CD8-positive, alpha-beta T cell (primary cell): ENCODE measurements at regions of chr9 and their contacts with region 1.

Region 1: DNA sequence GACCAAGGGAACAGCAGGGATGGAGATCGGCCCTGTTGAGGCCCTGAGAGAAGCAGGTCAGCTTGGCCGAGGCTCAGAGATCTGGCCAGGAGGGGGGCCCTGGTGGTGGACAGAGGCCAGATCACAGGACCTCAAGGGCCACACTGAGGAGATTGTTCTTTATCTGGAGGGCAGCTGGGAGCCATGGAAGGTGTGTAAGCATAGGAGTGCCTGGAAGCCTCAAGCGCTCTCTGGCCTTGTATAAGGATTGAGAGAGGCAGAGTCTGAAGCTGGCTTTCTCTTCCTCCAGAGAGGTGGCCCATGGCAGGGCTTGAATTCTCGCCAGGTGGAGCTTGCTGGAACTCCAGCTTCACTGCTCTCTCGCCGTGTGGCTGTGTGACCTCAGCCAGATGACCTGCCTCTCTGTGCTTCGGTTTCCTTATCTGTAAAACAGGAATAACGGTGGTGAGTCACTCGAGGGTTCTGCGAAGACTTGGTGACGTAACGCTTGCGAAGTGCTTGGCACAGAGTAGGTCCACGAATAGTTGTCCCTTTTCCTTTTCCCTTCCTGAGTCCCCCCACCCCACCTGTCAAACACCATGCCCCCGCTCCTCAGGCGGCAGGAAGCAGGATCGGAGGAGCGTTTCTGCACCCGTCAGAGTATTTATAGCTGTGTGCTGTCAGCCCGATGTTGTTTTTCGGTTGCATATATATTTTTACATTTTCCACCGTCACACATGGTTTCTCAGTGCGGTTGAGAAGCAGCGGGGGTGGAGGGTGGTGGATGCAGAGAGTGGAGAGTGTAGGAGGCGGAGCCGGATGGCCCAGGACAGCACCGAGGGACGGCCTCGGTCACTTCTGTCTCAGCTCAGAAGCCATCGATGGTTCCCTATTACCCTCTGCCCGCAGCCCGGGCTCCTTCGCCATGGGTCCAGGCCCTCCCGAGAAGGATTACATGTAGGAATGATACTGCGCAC is 17.0 kb upstream of the CRB2 start:
- DNase-seq: peak; percentile 8 to 76 (median 58)
- ATAC-seq: peak; percentile 72
- H3K4me3 ChIP-seq: peak overlapping the region; percentile 53 to 65
- H3K4me3 Mint-ChIP-seq: peak overlapping the region; percentile 89
- H3K27ac ChIP-seq: peak overlapping the region; percentile 10 to 46
- H3K27ac Mint-ChIP-seq: peak overlapping the region; percentile 91
- H3K4me1 ChIP-seq: peaks cover 25% of the 10 kb centered on the region
- H3K4me1 Mint-ChIP-seq: peaks cover 28% of the 10 kb centered on the region
- H3K27me3 ChIP-seq: no peaks in the 10 kb centered on the region
- H3K27me3 Mint-ChIP-seq: no peaks in the 10 kb centered on the region
- CTCF ChIP-seq: no peak

Region 2: DNA sequence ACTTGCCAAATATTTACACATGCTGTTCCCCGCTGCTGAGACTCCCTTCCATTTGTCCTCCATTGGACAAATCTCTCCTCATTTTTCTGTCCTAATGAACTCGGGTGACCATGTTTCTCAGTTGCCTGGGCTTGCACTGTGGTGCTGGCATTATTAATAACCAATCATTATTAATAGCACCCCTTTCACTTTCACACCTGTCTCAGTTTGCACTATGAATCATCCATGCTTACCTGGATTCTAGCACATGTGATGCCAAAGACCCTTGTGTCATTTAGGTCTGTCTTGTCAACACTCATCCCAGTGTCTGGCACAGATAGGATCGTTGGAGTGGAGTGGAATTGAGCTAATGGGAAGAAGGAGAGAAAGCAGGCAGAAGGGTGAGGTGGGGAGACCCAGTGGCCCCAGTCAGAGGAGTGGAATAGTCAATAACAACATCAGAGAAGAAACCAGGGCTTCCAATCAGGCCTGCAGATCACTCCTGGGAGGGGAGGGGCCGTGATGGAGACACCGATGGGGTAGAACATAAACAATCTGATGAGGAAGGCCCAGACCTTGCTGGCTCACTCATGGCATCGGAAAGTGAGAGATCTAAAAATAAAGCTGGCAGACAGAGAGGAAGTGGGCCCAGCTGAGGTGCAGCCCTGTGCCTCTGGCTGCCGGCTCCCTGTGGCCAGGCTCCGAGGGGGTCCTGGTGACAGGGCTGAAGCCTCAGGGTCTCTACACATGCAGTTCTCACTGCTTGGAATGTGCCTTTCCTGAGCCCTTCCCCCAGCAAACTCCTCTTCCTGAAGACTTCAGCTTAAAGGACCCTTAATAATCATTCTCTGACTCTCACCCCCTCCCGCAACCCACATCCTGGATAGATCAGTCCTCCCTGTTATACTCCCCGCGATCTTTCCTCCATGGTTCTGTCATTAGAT is 16.5 kb before region 1 on chr9:
- CTCF ChIA-PET with region 1: no interaction called
- POLR2A ChIA-PET with region 1: interaction called, 6 read pairs
- intact Hi-C with region 1: loop called (anchors 1 kb)
- DNase-seq: peak; percentile 29 to 85 (median 71)
- ATAC-seq: peak; percentile 85
- H3K4me3 ChIP-seq: peak overlapping the region; percentile 26 to 30
- H3K4me3 Mint-ChIP-seq: peak overlapping the region; percentile 75
- H3K27ac ChIP-seq: peak overlapping the region; percentile 54 to 59
- H3K27ac Mint-ChIP-seq: peak overlapping the region; percentile 93
- H3K4me1 ChIP-seq: peaks cover 32% of the 10 kb centered on the region
- H3K4me1 Mint-ChIP-seq: peaks cover 44% of the 10 kb centered on the region
- H3K27me3 ChIP-seq: no peaks in the 10 kb centered on the region
- H3K27me3 Mint-ChIP-seq: no peaks in the 10 kb centered on the region
- CTCF ChIP-seq: no peak

Region 3: GRCh38 chr9:123825342-123826060 is 486.5 kb after region 1 on chr9:
- CTCF ChIA-PET with region 1: no interaction called
- POLR2A ChIA-PET with region 1: no interaction called
- intact Hi-C with region 1: no loop called
- DNase-seq: no peak
- ATAC-seq: no peak
- H3K4me3 ChIP-seq: no peak overlapping the region
- H3K4me3 Mint-ChIP-seq: no peak overlapping the region
- H3K27ac ChIP-seq: no peak overlapping the region
- H3K27ac Mint-ChIP-seq: no peak overlapping the region
- H3K4me1 ChIP-seq: no peaks in the 10 kb centered on the region
- H3K4me1 Mint-ChIP-seq: no peaks in the 10 kb centered on the region
- H3K27me3 ChIP-seq: no peaks in the 10 kb centered on the region
- H3K27me3 Mint-ChIP-seq: no peaks in the 10 kb centered on the region
- CTCF ChIP-seq: no peak